Kidney (tissue), 22 donors: ENCODE measurements at regions of chr3 and their contacts with region 1.

Region 1: GRCh38 chr3:187745201-187746058 is at the start of gene BCL6:
- DNase-seq: peak; percentile 96 to 99 (median 98)
- H3K4me3 ChIP-seq: peak within 1 kb of the TSS; percentile 73 to 93 (median 86)
- H3K27ac ChIP-seq: peak within 1 kb of the TSS; percentile 99
- H3K4me1 ChIP-seq: peaks cover 8 to 24% (median 9%) of the 10 kb centered on the region in 3 donors
- H3K27me3 ChIP-seq: no peaks in the 10 kb centered on the region
- CTCF ChIP-seq: peak; percentile 14
- total RNA-seq, gene BCL6: 110 TPM

Region 2: GRCh38 chr3:187802928-187803259 is 57.5 kb after region 1 on chr3:
- intact Hi-C with region 1: no loop called
- DNase-seq: no peak
- H3K4me3 ChIP-seq: no peak overlapping the region
- H3K27ac ChIP-seq: no peak overlapping the region
- H3K4me1 ChIP-seq: no peaks in the 10 kb centered on the region
- H3K27me3 ChIP-seq: no peaks in the 10 kb centered on the region
- CTCF ChIP-seq: no peak

Region 3: DNA sequence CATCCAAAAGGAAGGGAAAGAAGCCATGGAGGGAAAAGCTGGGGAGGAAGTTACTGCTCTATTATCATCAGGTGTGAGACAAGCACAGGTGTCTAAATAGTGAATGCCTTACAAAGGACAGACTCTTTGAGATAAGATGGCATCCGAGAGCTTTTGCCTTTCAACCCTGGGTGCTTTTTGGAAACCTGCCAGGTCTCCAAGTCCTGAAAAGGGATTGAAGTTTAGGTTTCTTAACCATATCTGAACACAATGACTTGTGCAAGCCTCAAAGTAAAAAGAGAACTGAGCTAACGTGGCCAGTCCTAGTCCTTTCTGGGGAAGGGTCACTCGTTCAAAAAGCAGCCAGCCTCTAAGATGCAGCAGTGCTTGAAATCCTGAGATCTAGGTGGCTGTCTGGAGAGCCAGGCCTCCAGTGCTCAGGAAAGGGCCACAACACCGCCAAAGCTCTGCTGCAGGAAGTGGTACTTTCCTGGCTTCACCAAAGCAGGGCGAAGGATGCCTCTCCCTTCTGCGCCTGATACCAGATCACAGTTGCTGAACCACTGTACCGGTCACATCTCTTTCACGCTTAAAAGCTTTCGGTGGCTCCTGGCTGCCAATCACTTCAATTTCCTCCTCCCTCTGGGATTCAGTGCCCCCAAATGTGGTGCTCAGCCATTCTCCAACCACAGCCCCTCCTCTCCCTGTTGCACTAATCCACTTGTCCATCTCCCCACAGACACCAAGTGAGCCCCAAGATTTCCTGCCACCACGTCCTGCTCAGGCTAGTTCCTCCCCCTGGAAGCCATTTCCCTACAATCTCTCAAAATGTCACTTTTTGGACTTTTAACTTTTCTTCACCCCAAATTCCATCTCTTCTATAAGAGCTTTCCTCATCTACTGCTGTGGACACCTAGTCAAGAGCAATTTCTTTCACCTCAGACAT is 304.4 kb after region 1 on chr3:
- intact Hi-C with region 1: loop called (anchors 10 kb)
- DNase-seq: no peak
- H3K4me3 ChIP-seq: no peak overlapping the region
- H3K27ac ChIP-seq: no peak overlapping the region
- H3K4me1 ChIP-seq: peaks cover 8 to 10% (median 10%) of the 10 kb centered on the region in 3 donors
- H3K27me3 ChIP-seq: no peaks in the 10 kb centered on the region
- CTCF ChIP-seq: no peak